ENCODE measurements at regions of chr1 and their contacts with region 1.

Region 1: GRCh38 chr1:211133836-211134669 is at the start of gene KCNH1:
- DNase-seq: peak; percentile 91
- H3K4me3 Mint-ChIP-seq: peak within 1 kb of the TSS; percentile 65
- H3K27ac Mint-ChIP-seq: no peak within 1 kb of the TSS
- H3K4me1 Mint-ChIP-seq: no peaks in the 10 kb centered on the region
- H3K27me3 Mint-ChIP-seq: peaks cover 81% of the 10 kb centered on the region
- CTCF ChIP-seq: peak; percentile 98
- total RNA-seq, gene KCNH1: not detected in 2 replicates

Region 2: GRCh38 chr1:210407207-210407886 is 726.7 kb before region 1 on chr1:
- CTCF ChIA-PET with region 1: interaction called, 5 read pairs
- intact Hi-C with region 1: loop called (anchors 1 kb)
- DNase-seq: peak; percentile 70
- H3K4me3 Mint-ChIP-seq: no peak overlapping the region
- H3K27ac Mint-ChIP-seq: no peak overlapping the region
- H3K4me1 Mint-ChIP-seq: no peaks in the 10 kb centered on the region
- H3K27me3 Mint-ChIP-seq: no peaks in the 10 kb centered on the region
- CTCF ChIP-seq: peak; percentile 64

Region 3: GRCh38 chr1:210584439-210585113 is 549.5 kb before region 1 on chr1:
- CTCF ChIA-PET with region 1: interaction called, 23 read pairs
- intact Hi-C with region 1: loop called (anchors 1 kb)
- DNase-seq: peak; percentile 92
- H3K4me3 Mint-ChIP-seq: no peak overlapping the region
- H3K27ac Mint-ChIP-seq: no peak overlapping the region
- H3K4me1 Mint-ChIP-seq: no peaks in the 10 kb centered on the region
- H3K27me3 Mint-ChIP-seq: no peaks in the 10 kb centered on the region
- CTCF ChIP-seq: peak; percentile 70

Region 4: GRCh38 chr1:210822932-210823331 is 311.1 kb before region 1 on chr1:
- CTCF ChIA-PET with region 1: no interaction called
- intact Hi-C with region 1: loop called (anchors 10 kb)
- DNase-seq: no peak
- H3K4me3 Mint-ChIP-seq: no peak overlapping the region
- H3K27ac Mint-ChIP-seq: no peak overlapping the region
- H3K4me1 Mint-ChIP-seq: no peaks in the 10 kb centered on the region
- H3K27me3 Mint-ChIP-seq: peaks cover 36% of the 10 kb centered on the region
- CTCF ChIP-seq: no peak

Region 5: DNA sequence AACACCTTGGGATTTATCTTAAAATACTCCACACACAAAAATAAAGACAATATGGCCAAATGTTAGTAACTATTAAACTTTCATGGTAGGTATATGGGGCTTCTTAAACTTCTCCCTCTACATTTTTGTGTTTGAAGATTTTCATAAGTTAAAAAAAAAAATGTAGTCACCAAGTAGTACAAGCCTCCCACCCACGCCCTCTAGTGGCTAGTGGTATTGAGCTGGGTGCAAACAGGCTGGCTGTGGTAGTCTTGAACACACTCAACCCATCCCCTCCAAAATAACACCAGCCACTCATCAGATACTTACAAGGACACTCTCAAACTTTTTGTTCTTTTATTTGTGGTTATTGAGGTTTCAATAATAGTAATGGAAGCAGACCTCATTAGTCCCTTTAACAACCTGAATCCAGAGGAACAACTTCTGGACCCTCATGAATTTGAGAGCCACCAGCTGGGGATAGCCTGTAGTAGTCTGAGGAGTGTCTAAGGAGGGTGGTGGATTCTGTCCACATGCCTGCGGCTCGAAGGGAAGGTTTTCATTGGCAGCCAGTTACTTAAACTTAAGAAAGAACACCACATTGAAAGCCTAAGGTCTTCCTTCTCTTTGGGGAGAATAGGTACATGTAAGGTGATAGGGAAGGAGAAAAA is 342.3 kb after region 1 on chr1:
- CTCF ChIA-PET with region 1: no interaction called
- intact Hi-C with region 1: loop called (anchors 10 kb)
- DNase-seq: peak; percentile 89
- H3K4me3 Mint-ChIP-seq: no peak overlapping the region
- H3K27ac Mint-ChIP-seq: no peak overlapping the region
- H3K4me1 Mint-ChIP-seq: no peaks in the 10 kb centered on the region
- H3K27me3 Mint-ChIP-seq: peaks cover 10% of the 10 kb centered on the region
- CTCF ChIP-seq: peak; percentile 78